ENCODE measurements at regions of chr10 and their contacts with region 1.

Region 1: GRCh38 chr10:34854147-34854601 is 39.1 kb upstream of the PARD3 start:
- DNase-seq: no peak
- ATAC-seq: peak in 1 of 4 donors; percentile 39
- H3K4me3 ChIP-seq: no peak overlapping the region
- H3K27ac ChIP-seq: no peak overlapping the region
- H3K4me1 ChIP-seq: peaks cover 0 to 4% (median 0%) of the 10 kb centered on the region in 12 donors
- H3K27me3 ChIP-seq: peaks cover 0 to 13% (median 0%) of the 10 kb centered on the region in 9 donors
- CTCF ChIP-seq: no peak
- POLR2A ChIP-seq: no peak

Region 2: GRCh38 chr10:34916314-34916713 is 62.1 kb after region 1 on chr10:
- intact Hi-C with region 1: no loop called
- DNase-seq: no peak
- ATAC-seq: peak in 1 of 4 donors; percentile 39
- H3K4me3 ChIP-seq: no peak overlapping the region
- H3K27ac ChIP-seq: no peak overlapping the region
- H3K4me1 ChIP-seq: no peaks in the 10 kb centered on the region
- H3K27me3 ChIP-seq: peaks cover 0 to 7% (median 0%) of the 10 kb centered on the region in 9 donors
- CTCF ChIP-seq: no peak
- POLR2A ChIP-seq: no peak

Region 3: DNA sequence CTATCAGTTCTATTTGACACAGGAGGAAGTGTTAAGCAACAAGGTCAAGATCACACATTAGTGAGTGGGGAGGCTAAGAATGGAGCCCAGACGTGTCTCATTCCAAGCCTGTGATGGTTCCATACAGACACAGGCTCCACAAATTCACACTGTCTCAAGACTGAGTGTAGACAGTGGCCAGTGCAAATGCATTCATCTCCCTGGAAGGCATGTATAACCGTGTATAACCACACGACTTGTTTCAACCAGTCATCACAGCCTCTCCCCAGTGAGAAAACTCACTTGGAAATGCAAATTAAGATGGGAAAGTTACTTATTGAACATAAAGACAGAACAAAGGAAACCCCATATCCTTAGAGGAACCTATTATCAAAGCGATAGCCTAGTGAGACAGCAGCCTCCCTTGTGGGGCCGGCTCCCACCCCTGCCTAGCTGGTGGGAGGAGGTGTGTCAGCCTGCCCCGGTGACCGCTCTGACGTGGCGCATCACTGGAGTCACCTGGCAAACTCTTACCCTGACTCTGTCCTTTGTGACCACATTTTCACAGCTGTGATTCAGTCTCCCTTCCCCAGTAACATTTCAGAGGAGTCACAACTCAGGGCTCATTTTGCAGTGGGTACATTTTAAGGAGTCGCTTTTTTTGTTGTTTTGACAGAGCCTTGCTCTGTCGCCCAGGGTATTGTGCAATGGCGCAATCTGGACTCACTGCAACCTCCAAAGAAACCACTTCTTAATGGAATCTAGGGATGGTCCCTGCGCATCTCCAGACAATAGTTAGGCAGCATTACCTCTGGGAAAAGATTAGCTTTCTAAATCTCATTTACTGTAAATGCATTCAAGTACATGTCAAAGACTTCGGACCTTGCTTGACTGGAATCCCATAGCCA is 87.5 kb after region 1 on chr10:
- intact Hi-C with region 1: loop called in 1 of 10 experiments (anchors 5 kb)
- DNase-seq: no peak
- ATAC-seq: no peak
- H3K4me3 ChIP-seq: no peak overlapping the region
- H3K27ac ChIP-seq: no peak overlapping the region
- H3K4me1 ChIP-seq: no peaks in the 10 kb centered on the region
- H3K27me3 ChIP-seq: no peaks in the 10 kb centered on the region
- CTCF ChIP-seq: no peak
- POLR2A ChIP-seq: no peak

Measured in heart left ventricle (tissue), 16 donors.